Calu3 (cell line): ENCODE measurements at regions of chr22 and their contacts with region 1.

Region 1: DNA sequence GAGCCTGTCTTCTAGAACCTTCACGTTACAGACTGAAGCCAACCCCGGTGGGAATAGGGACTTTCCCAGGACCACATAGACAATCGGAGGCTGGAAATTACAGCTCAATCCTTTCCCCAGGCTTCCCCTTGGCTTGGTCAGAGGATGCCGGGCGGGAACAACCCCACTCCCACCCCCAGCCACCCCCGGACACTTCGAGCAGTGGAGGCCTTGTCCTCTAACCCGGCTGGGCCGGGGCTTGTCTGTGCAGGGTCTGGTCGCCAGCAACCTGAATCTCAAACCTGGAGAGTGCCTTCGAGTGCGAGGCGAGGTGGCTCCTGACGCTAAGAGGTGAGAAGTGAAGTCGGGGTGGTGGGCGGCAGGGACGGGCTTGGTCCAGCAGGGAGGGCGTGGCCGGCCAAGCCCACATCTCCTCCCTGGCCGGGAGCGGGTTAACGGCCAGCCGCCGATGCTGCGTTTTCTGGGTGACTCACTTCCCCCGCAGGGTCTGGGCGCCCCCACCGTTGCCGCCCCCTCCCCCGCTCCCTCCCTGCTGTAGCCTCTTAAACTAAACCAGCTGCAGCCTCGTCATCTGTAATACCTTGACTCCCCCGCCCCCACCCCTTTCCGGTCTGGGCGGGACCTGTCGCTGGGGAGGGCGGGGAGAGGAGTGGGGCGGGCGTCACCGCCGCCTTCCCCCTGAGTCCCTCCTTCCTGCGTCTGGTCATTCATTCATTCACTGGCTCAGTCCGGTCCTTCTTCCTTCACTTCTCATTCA is 1.5 kb downstream of the LGALS1 start:
- DNase-seq: peak; percentile 92
- H3K4me3 Mint-ChIP-seq: peak overlapping the region; percentile 68
- H3K27ac Mint-ChIP-seq: peak overlapping the region; percentile 43
- H3K4me1 Mint-ChIP-seq: peaks cover 9% of the 10 kb centered on the region
- H3K27me3 Mint-ChIP-seq: no peaks in the 10 kb centered on the region
- CTCF ChIP-seq: no peak

Region 2: DNA sequence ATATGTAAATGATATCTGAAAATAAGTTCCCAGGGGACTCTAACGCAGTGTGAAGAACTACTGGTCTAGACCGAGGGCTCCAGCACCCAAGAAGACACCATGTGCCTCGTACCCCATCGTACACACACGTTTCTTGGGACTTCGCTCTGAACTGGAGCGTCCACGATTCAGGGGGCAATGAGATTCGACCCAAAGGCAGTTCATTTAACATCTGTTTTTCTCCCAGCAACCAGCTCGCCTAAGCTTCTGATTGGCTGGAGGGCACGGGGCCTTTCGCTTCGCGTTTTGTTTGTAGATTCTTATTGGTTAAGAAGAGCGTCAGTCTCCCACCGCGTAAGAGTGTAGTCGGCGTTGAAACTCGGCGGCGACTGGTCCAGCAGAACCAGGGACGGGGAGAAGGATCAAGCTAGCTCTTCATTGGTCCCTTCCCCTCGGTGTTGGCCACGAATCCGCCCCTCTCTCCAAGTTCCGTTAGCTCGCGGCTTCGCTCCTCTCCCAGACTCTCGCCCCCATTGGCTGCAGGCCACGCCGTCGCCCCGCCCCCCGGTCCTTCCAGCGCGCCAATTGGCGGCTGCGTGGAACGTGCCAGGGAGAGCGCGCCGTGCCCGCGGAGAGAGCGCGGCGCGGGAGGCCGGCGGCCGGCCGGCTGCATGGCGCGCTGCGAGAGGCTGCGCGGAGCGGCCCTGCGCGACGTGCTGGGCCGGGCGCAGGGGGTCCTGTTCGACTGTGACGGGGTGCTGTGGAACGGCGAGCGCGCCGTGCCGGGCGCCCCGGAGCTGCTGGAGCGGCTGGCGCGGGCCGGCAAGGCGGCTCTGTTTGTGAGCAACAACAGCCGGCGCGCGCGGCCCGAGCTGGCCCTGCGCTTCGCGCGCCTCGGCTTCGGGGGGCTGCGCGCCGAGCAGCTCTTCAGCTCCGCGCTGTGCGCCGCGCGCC is 18.5 kb before region 1 on chr22 and contains the start of gene PDXP:
- CTCF ChIA-PET with region 1: interaction called, 13 read pairs
- intact Hi-C with region 1: no loop called
- DNase-seq: peak; percentile 99
- H3K4me3 Mint-ChIP-seq: peak within 1 kb of the TSS; percentile 92
- H3K27ac Mint-ChIP-seq: peak within 1 kb of the TSS; percentile 92
- H3K4me1 Mint-ChIP-seq: peaks cover 40% of the 10 kb centered on the region
- H3K27me3 Mint-ChIP-seq: no peaks in the 10 kb centered on the region
- CTCF ChIP-seq: no peak
- total RNA-seq, gene PDXP: 18.4 and 21.4 TPM in 2 replicates